ENCODE measurements at regions of chr1 and their contacts with region 1.

Region 1: GRCh38 chr1:6727535-6727934 is 25.9 kb upstream of the DNAJC11 start:
- DNase-seq: peak; percentile 36
- H3K4me3 Mint-ChIP-seq: no peak overlapping the region
- H3K27ac Mint-ChIP-seq: no peak overlapping the region
- H3K4me1 Mint-ChIP-seq: no peaks in the 10 kb centered on the region
- H3K27me3 Mint-ChIP-seq: peaks cover 10% of the 10 kb centered on the region

Region 2: GRCh38 chr1:6889875-6890480 is 162.4 kb after region 1 on chr1:
- intact Hi-C with region 1: loop called (anchors 2 kb)
- DNase-seq: no peak
- H3K4me3 Mint-ChIP-seq: no peak overlapping the region
- H3K27ac Mint-ChIP-seq: no peak overlapping the region
- H3K4me1 Mint-ChIP-seq: peaks cover under 1% of the 10 kb centered on the region
- H3K27me3 Mint-ChIP-seq: no peaks in the 10 kb centered on the region

Region 3: DNA sequence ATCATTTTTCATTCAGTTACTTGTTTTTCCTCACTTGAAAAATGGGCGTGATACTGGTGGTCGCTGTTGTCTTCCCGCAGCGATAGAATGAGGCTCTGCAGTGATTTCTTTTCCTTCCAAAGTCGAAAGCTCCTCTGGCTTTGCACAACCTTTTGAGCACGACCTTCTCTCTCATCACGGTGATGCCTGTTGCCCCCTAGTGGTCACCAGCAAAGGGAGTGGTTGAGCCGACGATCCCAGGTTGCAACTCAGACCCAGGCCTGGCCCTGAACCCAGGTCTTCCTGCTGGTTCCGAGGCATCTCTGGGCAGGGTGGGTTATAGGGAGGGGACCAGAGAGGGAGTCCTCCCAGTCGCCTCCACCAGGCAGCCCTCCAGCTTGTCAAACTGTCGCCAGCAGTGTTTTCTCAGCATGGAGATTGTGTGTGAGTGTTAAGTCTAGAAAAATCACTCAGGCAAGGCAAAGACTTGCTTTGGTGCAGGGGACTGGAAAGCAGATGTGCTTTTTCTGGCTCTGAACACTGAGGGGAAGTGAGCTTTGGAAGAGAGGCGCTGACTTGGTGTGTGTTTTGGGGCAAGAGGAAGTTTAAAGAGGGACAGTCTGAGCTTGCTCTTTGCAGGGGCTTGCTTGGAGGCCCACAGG is 343.0 kb after region 1 on chr1:
- intact Hi-C with region 1: loop called (anchors 5 kb)
- DNase-seq: peak; percentile 30
- H3K4me3 Mint-ChIP-seq: no peak overlapping the region
- H3K27ac Mint-ChIP-seq: no peak overlapping the region
- H3K4me1 Mint-ChIP-seq: no peaks in the 10 kb centered on the region
- H3K27me3 Mint-ChIP-seq: no peaks in the 10 kb centered on the region